H1 (cell line): ENCODE measurements at regions of chr2 and their contacts with region 1.

Region 1: DNA sequence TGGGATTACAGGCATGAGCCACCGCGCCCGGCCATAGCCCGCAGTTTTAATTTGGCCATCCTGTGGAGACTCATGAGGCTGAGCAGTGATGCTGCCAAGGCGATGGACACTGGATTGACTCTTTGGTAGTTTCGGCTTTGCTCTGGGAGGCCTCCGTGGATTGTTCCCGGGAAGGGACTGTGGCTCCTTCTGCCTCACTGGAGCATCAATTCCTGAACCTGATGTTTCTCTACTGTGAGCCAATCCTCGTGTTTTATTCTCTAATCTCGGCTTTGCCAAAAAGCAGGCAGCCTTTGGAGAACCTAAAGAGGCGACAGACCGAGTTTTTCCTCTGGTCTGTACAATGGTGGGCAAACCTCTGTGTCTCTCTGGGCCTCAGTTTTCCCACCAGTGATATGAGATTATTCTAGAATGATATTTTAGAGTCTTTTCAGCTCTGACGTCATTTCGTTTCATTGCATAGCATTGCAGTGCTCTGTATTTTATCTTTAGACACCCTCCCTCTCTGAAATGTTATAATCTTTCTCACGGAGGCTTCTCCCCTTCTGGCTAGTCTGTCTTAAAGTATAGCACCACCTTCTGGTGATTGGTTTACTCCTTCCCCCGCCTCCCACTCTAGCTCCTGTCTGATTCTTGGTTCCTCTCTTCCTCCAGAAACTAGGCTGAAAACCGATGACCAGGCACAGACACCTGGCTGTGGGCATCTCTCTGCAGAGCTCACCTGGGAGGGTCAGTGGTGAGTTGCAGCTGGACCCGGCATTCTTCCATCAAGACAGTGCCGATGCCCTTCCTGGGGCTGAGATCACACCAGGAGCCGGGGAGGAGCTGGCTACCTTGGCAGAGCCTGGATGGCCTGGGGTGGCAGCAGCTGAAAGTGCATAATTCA is 341.3 kb downstream of the MYCN start:
- DNase-seq: peak; percentile 27 to 57
- H3K4me3 ChIP-seq: no peak overlapping the region
- H3K27ac ChIP-seq: no peak overlapping the region
- H3K4me1 ChIP-seq: peaks cover 0 to 2% (median 0%) of the 10 kb centered on the region in 4 experiments; a peak in 2 of 7 replicates
- H3K27me3 ChIP-seq: no peaks in the 10 kb centered on the region
- CTCF ChIP-seq: peak; percentile 8 to 67 (median 59)
- EP300 ChIP-seq: no peak
- POLR2A ChIP-seq: no peak
- RAD21 ChIP-seq: peak; percentile 80 to 82

Region 2: DNA sequence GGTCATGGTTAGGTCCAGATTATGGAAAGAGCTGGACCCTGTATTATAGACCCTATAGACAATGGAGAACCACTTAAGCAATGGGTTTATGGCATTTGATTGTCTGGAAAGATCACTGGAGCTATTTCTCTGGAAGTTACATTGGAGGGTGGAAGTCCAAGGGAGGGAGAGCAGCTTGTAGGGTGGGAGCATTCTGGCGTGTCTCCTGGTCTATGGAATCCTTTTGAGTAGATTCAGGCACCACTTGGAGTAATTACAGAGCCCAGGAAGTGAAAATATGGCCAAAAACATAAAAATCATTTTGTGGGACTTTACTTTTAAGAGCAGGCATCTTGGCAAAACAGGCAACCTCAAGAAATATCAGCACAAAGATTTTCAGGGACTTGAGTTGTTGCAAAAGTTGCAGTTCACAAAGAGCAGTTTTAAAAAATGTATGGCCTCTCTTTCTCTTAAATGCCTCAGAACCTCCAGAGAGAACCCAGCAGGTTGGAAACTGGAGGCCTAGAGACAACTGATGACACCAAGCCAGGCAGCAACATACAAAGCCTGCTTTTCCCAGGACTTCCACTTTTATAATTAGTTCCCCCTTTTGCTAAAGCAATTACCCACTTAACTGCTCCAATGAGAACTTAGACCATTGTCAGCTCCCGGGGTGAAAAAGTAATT is 10.3 kb before region 1 on chr2:
- CTCF ChIA-PET with region 1: interaction called, 19 read pairs
- POLR2A ChIA-PET with region 1: no interaction called
- DNase-seq: no peak
- H3K4me3 ChIP-seq: no peak overlapping the region
- H3K27ac ChIP-seq: no peak overlapping the region
- H3K4me1 ChIP-seq: no peaks in the 10 kb centered on the region
- H3K27me3 ChIP-seq: no peaks in the 10 kb centered on the region
- CTCF ChIP-seq: no peak
- EP300 ChIP-seq: no peak
- POLR2A ChIP-seq: no peak
- RAD21 ChIP-seq: no peak

Region 3: DNA sequence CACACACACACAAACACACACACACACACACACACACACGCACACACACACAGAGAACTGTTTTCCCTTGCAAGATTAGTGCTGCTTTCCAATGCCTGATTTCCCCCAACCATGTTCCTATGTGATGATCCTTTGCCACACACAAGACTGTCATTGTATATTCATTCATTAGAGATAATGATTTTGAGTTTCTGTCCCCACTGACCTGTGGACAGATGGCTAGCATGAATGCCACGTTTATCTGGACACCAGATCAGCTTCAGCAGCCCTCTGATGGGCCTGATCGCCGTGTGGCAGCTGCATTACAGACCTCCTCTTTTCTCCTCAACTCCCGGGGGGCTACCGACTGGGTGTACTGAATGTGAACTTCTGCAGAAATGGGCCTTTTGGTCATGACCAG is 11.7 kb after region 1 on chr2:
- CTCF ChIA-PET with region 1: interaction called, 15 read pairs
- POLR2A ChIA-PET with region 1: no interaction called
- DNase-seq: peak in 1 of 2 experiments; percentile 28
- H3K4me3 ChIP-seq: no peak overlapping the region
- H3K27ac ChIP-seq: no peak overlapping the region
- H3K4me1 ChIP-seq: no peaks in the 10 kb centered on the region
- H3K27me3 ChIP-seq: no peaks in the 10 kb centered on the region
- CTCF ChIP-seq: no peak
- EP300 ChIP-seq: no peak
- POLR2A ChIP-seq: no peak
- RAD21 ChIP-seq: no peak

Region 4: GRCh38 chr2:16302431-16303272 is 21.0 kb after region 1 on chr2:
- CTCF ChIA-PET with region 1: interaction called, 10 read pairs
- POLR2A ChIA-PET with region 1: no interaction called
- DNase-seq: no peak
- H3K4me3 ChIP-seq: peak overlapping the region in 1 of 4 experiments; percentile 3; a peak in 1 of 8 replicates
- H3K27ac ChIP-seq: no peak overlapping the region
- H3K4me1 ChIP-seq: peaks cover 4 to 12% (median 11%) of the 10 kb centered on the region in 4 experiments; a peak in 5 of 7 replicates
- H3K27me3 ChIP-seq: no peaks in the 10 kb centered on the region; a peak in 1 of 7 replicates
- CTCF ChIP-seq: no peak
- EP300 ChIP-seq: no peak
- POLR2A ChIP-seq: no peak
- RAD21 ChIP-seq: no peak

Region 5: DNA sequence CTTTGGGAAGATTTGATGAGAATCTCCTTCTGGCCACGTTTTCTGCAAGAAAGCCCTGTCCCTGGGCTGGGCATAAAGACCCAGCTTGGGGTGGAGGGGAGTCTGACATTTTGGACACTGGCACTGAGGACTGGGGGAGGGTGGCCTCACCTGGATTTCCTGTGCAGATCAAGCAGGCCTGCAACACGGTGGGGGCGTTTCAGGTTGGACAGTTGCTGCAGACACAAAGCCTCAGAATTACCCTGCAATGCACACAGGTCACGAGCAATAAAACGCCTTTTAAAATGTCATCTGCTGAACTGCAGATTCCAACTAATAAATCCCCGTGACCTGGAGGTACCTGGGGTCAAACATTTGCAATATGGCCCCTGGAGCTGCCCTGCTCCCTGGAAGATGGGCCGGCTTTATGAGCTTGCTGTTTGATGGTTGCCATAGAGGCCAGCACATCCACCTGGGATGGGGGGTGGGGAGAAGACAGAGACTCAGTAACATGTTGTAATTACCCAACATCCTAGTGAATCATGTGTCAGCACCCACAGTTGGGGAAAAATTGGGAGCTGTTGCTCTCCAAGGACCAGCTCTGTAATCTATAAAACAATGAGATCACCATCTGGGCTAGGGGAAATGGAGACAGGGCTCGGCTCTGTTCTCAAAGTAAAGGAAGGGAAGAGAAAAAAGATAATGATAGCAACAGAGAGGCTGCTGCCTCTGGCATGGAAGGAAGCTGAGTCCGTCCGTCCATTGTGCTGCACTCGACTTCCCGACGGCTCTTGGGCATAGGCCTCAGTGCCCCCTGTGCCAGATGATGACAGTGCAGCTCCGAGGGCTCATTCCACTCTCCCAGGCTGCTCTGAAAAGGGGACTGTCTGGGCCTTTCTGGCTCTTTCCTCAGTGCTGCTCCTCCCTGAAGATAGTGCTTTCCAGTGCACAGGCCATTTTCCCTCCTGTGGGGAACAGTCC is 43.6 kb after region 1 on chr2:
- CTCF ChIA-PET with region 1: interaction called, 10 read pairs
- POLR2A ChIA-PET with region 1: no interaction called
- DNase-seq: no peak
- H3K4me3 ChIP-seq: no peak overlapping the region
- H3K27ac ChIP-seq: no peak overlapping the region
- H3K4me1 ChIP-seq: peaks cover 3 to 5% (median 3%) of the 10 kb centered on the region in 4 experiments
- H3K27me3 ChIP-seq: 0 out of 7 replicates have a peak, but pooled peaks cover 0 to 3% (median 1%) of the 10 kb centered on the region in 4 experiments
- CTCF ChIP-seq: no peak
- EP300 ChIP-seq: no peak
- POLR2A ChIP-seq: no peak
- RAD21 ChIP-seq: peak in 1 of 2 experiments; percentile 16; a peak in 2 of 4 replicates

Region 6: DNA sequence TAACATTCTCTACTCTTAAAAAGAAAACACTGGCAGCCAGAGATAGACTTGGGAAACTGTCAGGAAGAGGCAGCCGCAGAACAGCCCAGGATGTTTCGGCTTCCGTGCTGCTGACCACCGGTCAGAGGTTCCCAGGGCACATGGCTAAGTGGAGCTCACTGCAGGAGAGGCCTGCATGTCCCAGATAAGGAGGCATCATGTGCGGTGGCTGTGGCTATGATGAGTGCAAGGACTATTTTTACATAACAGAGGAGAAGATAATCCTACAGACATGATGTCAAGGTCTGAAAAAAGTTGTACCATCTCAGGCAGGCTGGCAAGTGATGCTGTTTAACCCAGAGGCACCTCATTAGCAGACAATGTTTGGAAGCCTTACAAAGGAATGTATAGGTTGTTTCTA is 131.6 kb after region 1 on chr2:
- CTCF ChIA-PET with region 1: no interaction called
- POLR2A ChIA-PET with region 1: no interaction called
- DNase-seq: no peak
- H3K4me3 ChIP-seq: no peak overlapping the region
- H3K27ac ChIP-seq: no peak overlapping the region
- H3K4me1 ChIP-seq: no peaks in the 10 kb centered on the region
- H3K27me3 ChIP-seq: peaks cover 0 to 1% (median 0%) of the 10 kb centered on the region in 4 experiments; a peak in 1 of 7 replicates
- CTCF ChIP-seq: no peak
- EP300 ChIP-seq: no peak
- POLR2A ChIP-seq: no peak
- RAD21 ChIP-seq: no peak

Region 7: GRCh38 chr2:16584824-16585540 is 303.3 kb after region 1 on chr2:
- CTCF ChIA-PET with region 1: no interaction called
- POLR2A ChIA-PET with region 1: no interaction called
- DNase-seq: no peak
- H3K4me3 ChIP-seq: no peak overlapping the region
- H3K27ac ChIP-seq: no peak overlapping the region
- H3K4me1 ChIP-seq: peaks cover 2 to 5% (median 5%) of the 10 kb centered on the region in 4 experiments; a peak in 4 of 7 replicates
- H3K27me3 ChIP-seq: no peaks in the 10 kb centered on the region
- CTCF ChIP-seq: no peak
- EP300 ChIP-seq: no peak
- POLR2A ChIP-seq: no peak
- RAD21 ChIP-seq: no peak